Prostate gland (tissue), 2 donors: ENCODE measurements at regions of chr11 and their contacts with region 1.

Region 1: DNA sequence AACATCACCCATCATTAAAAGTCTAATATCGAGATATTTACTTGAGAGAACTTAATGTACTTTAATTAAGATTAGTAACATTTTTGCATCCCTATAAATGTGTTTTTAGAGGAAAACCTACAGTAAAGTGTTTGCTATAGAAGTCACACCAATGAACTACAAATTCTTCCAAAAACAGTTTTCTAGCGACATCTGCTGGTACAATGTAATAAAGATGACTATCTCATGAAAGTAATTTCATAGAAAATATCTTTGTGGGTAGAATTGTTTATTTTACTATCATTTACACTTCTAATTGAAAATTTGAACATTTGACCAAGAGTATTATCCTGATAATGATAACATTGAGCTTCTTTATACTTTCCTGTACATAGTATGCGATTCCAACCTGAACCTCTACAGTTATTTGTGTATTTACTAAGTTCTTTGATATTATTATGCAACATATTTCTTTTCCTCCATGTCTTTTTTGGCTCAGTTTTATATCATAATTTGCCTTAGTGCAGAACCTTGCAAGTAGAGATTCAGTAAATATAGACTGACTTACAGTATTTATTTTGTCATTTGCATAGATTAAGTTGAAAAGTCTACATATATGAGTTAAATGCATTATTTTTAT is 252.7 kb downstream of the TMEM135 start:
- DNase-seq: no peak
- H3K4me3 ChIP-seq: no peak overlapping the region
- H3K27ac ChIP-seq: no peak overlapping the region
- H3K4me1 ChIP-seq: no peaks in the 10 kb centered on the region
- H3K27me3 ChIP-seq: no peaks in the 10 kb centered on the region
- CTCF ChIP-seq: peak; percentile 52 to 75 (median 71)
- POLR2A ChIP-seq: no peak

Region 2: GRCh38 chr11:86869966-86870570 is 420.3 kb before region 1 on chr11:
- intact Hi-C with region 1: loop called (anchors 2 kb)
- DNase-seq: peak; percentile 28
- H3K4me3 ChIP-seq: no peak overlapping the region
- H3K27ac ChIP-seq: no peak overlapping the region
- H3K4me1 ChIP-seq: no peaks in the 10 kb centered on the region
- H3K27me3 ChIP-seq: no peaks in the 10 kb centered on the region
- CTCF ChIP-seq: peak; percentile 23 to 71 (median 62)
- POLR2A ChIP-seq: no peak

Region 3: DNA sequence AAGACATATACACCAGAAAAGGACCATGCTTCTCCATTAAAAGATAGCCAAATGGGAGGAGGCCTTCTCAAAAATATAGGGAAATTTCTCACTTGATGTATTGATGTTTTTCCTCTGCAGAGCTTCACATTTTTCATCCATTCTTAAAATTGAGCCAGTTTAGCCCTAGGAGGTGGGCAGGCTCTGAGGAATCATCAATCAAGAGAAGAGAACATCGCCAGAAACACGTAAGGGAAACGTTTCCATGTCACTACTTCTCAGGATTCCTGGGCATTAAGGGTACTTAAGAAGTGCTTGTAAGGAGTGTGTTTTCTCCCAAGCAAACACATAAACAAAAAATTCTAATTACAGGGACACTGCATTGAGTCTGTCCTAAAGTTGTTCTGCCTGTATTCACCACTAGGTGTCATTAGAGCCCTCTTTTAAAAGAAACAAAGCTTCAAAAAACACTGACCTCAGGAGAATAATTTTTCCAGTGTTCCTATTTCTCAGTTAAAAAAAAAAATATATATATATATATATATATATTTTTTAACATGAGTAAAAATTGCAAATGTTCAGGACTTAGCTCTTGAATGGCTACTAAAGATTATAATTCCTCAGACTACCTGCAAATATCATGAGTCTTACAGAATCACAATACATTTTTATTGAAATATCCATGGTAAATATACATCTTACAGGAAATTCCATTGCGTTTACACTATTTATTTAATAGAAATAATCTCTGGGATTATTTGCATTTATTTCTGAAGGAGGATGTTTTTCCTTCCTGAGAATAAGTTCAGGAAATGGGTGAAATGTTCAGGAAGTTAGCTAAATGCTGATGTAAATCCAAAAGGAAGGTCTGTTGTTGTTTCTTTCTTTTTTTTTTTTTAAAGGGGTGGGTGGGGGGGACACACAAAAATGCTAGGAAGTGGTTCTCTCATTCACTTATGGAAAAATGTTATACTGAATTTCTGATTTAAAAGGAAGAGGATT is 351.2 kb before region 1 on chr11:
- intact Hi-C with region 1: loop called (anchors 1 kb)
- DNase-seq: peak; percentile 32
- H3K4me3 ChIP-seq: no peak overlapping the region
- H3K27ac ChIP-seq: peak overlapping the region; percentile 32 to 64
- H3K4me1 ChIP-seq: peaks cover 16% of the 10 kb centered on the region
- H3K27me3 ChIP-seq: no peaks in the 10 kb centered on the region
- CTCF ChIP-seq: peak; percentile 54 to 81 (median 68)
- POLR2A ChIP-seq: no peak

Region 4: DNA sequence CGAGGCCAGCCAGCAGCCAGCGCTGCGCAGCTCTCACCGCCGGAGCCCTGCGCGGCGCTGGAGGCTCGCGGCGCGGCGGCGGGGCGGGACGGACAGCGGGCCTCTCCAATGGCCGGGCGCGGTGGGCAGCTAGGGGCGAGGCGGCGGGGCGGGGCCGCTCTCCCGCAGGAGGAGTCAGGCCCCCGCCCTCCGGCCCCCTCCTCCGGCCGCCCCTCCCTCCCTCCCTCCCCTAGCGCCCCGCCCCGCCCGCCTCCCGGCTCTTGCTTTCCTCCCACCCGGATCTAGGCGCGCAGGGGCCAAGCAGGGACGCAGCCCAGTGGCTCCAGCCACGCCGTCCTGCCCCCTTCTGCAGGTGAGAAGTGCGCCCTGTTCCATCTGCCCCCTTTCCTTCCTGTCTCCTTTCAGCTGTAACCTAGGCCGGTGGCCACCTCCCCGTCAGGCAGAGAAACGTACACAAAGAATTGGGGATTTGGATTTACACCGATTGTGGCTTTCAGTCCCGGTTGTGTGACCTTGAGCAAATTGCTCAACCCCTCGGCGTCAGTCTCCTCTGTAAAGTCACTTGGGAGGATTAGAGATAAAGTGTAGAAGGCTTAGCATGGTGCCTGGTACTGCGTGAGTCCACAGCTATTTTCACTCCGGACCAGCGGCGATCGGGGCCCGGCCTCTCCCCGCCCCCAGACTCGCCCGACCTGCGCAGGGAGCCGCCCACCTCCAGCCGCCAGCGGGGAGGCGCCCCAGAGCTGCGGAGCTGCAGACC is 334.9 kb before region 1 on chr11 and contains the start of gene FZD4:
- intact Hi-C with region 1: loop called (anchors 5 kb)
- DNase-seq: peak; percentile 90
- H3K4me3 ChIP-seq: peak within 1 kb of the TSS; percentile 85 to 91
- H3K27ac ChIP-seq: peak within 1 kb of the TSS; percentile 87 to 89
- H3K4me1 ChIP-seq: no peaks in the 10 kb centered on the region
- H3K27me3 ChIP-seq: no peaks in the 10 kb centered on the region
- CTCF ChIP-seq: peak; percentile 35 to 67 (median 42)
- POLR2A ChIP-seq: peak; percentile 13
- total RNA-seq, gene FZD4: 34.3 to 38.3 TPM